CD4-positive, alpha-beta memory T cell (primary cell): ENCODE measurements at regions of chr3 and their contacts with region 1.

Region 1: DNA sequence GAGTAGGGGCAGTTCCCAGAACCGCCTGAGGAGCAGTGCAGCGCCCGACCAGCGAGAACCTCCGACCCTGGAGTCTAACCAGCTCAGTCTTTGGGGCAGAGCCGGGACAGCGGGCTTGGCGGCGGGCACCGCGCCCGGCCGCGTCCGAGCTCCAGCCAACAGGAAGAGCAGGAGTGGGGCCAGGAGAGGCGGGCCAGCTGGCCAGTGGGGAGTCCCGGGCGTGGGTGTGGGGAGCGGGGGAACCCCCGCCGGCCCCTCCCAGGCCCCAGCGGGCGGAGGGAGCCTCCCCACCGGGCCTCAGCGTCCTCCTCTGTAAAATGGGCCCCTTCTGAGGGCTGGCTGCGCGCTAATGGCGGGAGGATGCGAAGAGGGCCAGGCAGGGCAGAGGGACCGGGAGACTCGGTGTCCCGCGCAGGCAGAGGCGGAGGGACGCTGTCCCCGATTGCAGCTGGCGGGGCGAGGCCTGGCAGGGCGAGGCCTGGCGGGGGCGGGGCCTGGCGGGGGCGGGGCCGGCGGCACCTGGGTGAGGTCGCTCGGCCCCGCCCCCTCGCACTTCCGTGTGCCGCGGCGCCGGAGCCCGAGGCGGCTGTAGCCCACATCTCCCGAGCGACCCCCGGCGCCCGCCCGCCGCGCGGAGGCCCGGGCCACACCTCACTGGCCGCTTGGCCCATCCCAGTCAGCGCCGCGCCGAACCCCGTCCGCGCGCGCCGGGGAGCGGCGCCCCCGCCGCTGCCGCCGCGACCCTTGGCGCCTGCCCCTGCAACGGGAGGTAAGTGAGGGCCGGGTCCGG is at the start of gene PRKCD:
- DNase-seq: peak; percentile 75 to 82 (median 78)
- H3K4me3 ChIP-seq: peak within 1 kb of the TSS; percentile 52 to 73
- H3K4me3 Mint-ChIP-seq: peak within 1 kb of the TSS; percentile 89 to 94 (median 91)
- H3K27ac ChIP-seq: peak within 1 kb of the TSS; percentile 72
- H3K27ac Mint-ChIP-seq: peak within 1 kb of the TSS; percentile 84 to 97 (median 93)
- H3K4me1 ChIP-seq: peaks cover 24% of the 10 kb centered on the region
- H3K4me1 Mint-ChIP-seq: peaks cover 18 to 38% (median 23%) of the 10 kb centered on the region in 4 donors
- H3K27me3 ChIP-seq: no peaks in the 10 kb centered on the region
- H3K27me3 Mint-ChIP-seq: peaks cover 0 to 3% of the 10 kb centered on the region in 2 donors
- total RNA-seq, gene PRKCD: 15.7 to 16.6 TPM

Region 2: GRCh38 chr3:53130179-53131061 is 30.4 kb before region 1 on chr3 and contains the start of gene RFT1:
- CTCF ChIA-PET with region 1: interaction called, 12 read pairs
- POLR2A ChIA-PET with region 1: interaction called, 22 read pairs
- intact Hi-C with region 1: loop called (anchors 1 kb)
- DNase-seq: peak; percentile 96 to 98 (median 97)
- H3K4me3 ChIP-seq: peak within 1 kb of the TSS; percentile 66 to 77
- H3K4me3 Mint-ChIP-seq: peak within 1 kb of the TSS; percentile 88 to 93 (median 91)
- H3K27ac ChIP-seq: peak within 1 kb of the TSS; percentile 83
- H3K27ac Mint-ChIP-seq: peak within 1 kb of the TSS; percentile 96 to 100 (median 99)
- H3K4me1 ChIP-seq: peaks cover 20% of the 10 kb centered on the region
- H3K4me1 Mint-ChIP-seq: peaks cover 18 to 31% (median 25%) of the 10 kb centered on the region in 4 donors
- H3K27me3 ChIP-seq: no peaks in the 10 kb centered on the region
- H3K27me3 Mint-ChIP-seq: no peaks in the 10 kb centered on the region
- total RNA-seq, gene RFT1: 25.3 to 28.4 TPM

Region 3: GRCh38 chr3:53195602-53196574 is 35.0 kb after region 1 on chr3:
- CTCF ChIA-PET with region 1: interaction called, 5 read pairs
- POLR2A ChIA-PET with region 1: no interaction called
- intact Hi-C with region 1: loop called (anchors 5 kb)
- DNase-seq: peak; percentile 43 to 63 (median 49)
- H3K4me3 ChIP-seq: no peak overlapping the region
- H3K4me3 Mint-ChIP-seq: peak overlapping the region in 1 of 8 donors; percentile 18
- H3K27ac ChIP-seq: no peak overlapping the region
- H3K27ac Mint-ChIP-seq: peak overlapping the region in 2 of 7 donors; percentile 53 to 73
- H3K4me1 ChIP-seq: peaks cover 8% of the 10 kb centered on the region
- H3K4me1 Mint-ChIP-seq: peaks cover 2 to 9% (median 6%) of the 10 kb centered on the region in 4 donors
- H3K27me3 ChIP-seq: no peaks in the 10 kb centered on the region
- H3K27me3 Mint-ChIP-seq: peaks cover 0 to 5% of the 10 kb centered on the region in 2 donors

Region 4: GRCh38 chr3:53255775-53256703 is 95.2 kb after region 1 on chr3 and contains the start of gene TKT:
- CTCF ChIA-PET with region 1: no interaction called
- POLR2A ChIA-PET with region 1: no interaction called
- intact Hi-C with region 1: loop called (anchors 2 kb)
- DNase-seq: peak; percentile 71 to 80 (median 72)
- H3K4me3 ChIP-seq: peak within 1 kb of the TSS; percentile 79 to 90
- H3K4me3 Mint-ChIP-seq: peak within 1 kb of the TSS; percentile 91 to 95 (median 92)
- H3K27ac ChIP-seq: peak within 1 kb of the TSS; percentile 62
- H3K27ac Mint-ChIP-seq: peak within 1 kb of the TSS; percentile 78 to 91 (median 88)
- H3K4me1 ChIP-seq: peaks cover 35% of the 10 kb centered on the region
- H3K4me1 Mint-ChIP-seq: peaks cover 20 to 42% (median 31%) of the 10 kb centered on the region in 4 donors
- H3K27me3 ChIP-seq: no peaks in the 10 kb centered on the region
- H3K27me3 Mint-ChIP-seq: no peaks in the 10 kb centered on the region
- total RNA-seq, gene TKT: 75.6 to 87.9 TPM